ENCODE measurements at regions of chr7 and their contacts with region 1.

Region 1: DNA sequence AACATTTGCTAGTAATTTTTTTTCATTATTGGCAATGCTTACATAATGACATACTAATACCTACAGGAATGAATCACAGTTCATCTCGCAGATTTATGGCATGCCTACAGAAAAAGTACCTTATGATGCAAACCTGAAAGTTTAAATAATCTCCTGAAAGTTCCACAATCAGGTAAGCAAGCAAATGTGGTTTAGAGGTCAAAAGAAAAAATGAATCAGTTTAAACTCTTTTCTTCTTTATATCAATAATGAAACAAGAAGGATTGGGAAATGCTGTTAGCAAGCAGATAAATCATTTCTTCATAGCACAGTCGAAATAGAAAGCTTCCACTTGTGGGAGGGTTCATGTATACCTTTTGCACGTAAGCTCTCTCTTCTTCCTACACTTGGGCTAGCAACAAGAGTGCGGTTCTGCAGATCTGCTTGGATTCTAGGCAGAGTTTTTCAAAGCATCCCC is 53.7 kb upstream of the MTPN start:
- DNase-seq: no peak
- H3K4me3 ChIP-seq: no peak overlapping the region
- H3K27ac ChIP-seq: peak overlapping the region in 2 of 4 donors; percentile 78 to 82
- H3K4me1 ChIP-seq: peaks cover 0 to 9% (median 7%) of the 10 kb centered on the region in 4 donors
- H3K27me3 ChIP-seq: no peaks in the 10 kb centered on the region
- CTCF ChIP-seq: no peak
- EP300 ChIP-seq: no peak
- POLR2A ChIP-seq: no peak

Region 2: DNA sequence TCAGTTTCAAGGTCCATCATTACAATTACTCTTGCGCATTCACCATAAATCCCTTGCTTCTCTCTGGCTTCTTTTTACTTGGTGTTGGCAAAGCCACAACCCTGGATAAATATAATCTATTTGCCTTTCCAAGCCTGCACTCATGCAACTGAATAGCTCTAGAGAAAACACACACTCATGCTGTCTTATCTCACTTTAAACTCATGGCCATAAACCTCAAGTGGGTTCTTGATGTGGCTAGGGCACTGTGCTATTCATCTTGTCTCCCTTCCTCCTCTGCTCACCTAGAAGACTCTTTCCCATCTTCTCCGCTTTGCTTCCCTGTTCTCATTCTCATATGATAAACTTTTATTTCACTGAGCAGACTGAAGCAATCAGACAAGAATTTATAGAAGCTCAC is 111.7 kb after region 1 on chr7:
- in situ Hi-C with region 1: no loop called
- intact Hi-C with region 1: loop called (anchors 5 kb)
- DNase-seq: no peak
- H3K4me3 ChIP-seq: no peak overlapping the region
- H3K27ac ChIP-seq: peak overlapping the region in 2 of 4 donors; percentile 47 to 50
- H3K4me1 ChIP-seq: no peaks in the 10 kb centered on the region
- H3K27me3 ChIP-seq: no peaks in the 10 kb centered on the region
- CTCF ChIP-seq: no peak
- EP300 ChIP-seq: no peak
- POLR2A ChIP-seq: no peak

Region 3: GRCh38 chr7:136874238-136875032 is 843.5 kb after region 1 on chr7:
- in situ Hi-C with region 1: no loop called
- intact Hi-C with region 1: loop called (anchors 10 kb)
- DNase-seq: no peak
- H3K4me3 ChIP-seq: no peak overlapping the region
- H3K27ac ChIP-seq: no peak overlapping the region
- H3K4me1 ChIP-seq: peaks cover 0 to under 1% (median 0%) of the 10 kb centered on the region in 4 donors
- H3K27me3 ChIP-seq: peaks cover 30% of the 10 kb centered on the region
- CTCF ChIP-seq: peak in 3 of 5 experiments; percentile 14 to 30 (median 19)
- EP300 ChIP-seq: no peak
- POLR2A ChIP-seq: no peak